ENCODE measurements at regions of chr1 and their contacts with region 1.

Region 1: DNA sequence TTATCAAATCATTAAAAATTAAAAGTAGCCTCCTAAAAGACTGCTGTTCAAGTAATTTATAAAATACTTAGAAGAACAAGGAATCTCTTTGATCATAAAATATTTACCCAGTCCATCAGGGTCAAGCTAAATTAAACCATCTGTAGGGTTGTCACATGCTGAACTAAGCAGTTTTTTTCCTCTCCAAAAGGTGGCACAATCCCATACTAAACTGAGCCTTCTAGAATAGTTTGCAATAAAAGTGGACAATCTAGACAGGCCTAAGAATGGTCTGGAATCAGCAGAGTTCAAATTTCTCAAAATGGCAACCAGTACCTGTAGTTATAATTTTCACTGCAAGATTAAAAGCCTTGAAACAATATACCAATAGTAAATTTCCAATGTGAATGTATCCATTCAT is 194.8 kb downstream of the EIF4G3 start:
- DNase-seq: peak; percentile 18
- ATAC-seq: peak; percentile 60; the same call in 1 of the 2 replicates
- H3K4me3 ChIP-seq: no peak overlapping the region
- H3K27ac ChIP-seq: no peak overlapping the region
- H3K4me1 ChIP-seq: peaks cover 10% of the 10 kb centered on the region
- H3K27me3 ChIP-seq: no peaks in the 10 kb centered on the region
- CTCF ChIP-seq: peak; percentile 43; the same call in 1 of the 2 replicates

Region 2: GRCh38 chr1:19468397-19468956 is 1513.4 kb before region 1 on chr1:
- CTCF ChIA-PET with region 1: no interaction called
- POLR2A ChIA-PET with region 1: no interaction called
- in situ Hi-C with region 1: no loop called
- intact Hi-C with region 1: no loop called
- DNase-seq: no peak
- ATAC-seq: no peak
- H3K4me3 ChIP-seq: no peak overlapping the region
- H3K27ac ChIP-seq: peak overlapping the region; percentile 76
- H3K4me1 ChIP-seq: peaks cover 69% of the 10 kb centered on the region
- H3K27me3 ChIP-seq: no peaks in the 10 kb centered on the region
- CTCF ChIP-seq: no peak

Region 3: DNA sequence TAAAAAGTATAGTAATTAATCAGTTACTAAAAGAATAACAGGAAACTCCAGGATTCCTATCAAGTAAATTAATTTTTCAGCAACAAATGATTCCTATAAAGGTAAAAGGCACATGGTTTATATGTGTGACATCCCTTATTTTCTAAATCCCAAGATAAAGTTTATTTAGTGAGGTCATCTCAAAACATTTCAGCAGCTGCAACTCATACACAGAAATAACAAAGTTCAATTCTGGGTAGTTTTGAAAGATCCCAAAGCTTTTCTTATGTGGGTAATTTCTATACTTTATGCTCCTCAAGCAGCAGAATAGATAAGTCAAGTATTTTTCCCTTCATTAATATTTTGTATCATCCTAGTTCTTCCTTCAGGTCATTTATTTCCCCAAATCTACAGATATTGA is 77.1 kb after region 1 on chr1:
- CTCF ChIA-PET with region 1: no interaction called
- POLR2A ChIA-PET with region 1: no interaction called
- in situ Hi-C with region 1: no loop called
- intact Hi-C with region 1: no loop called
- DNase-seq: no peak
- ATAC-seq: no peak
- H3K4me3 ChIP-seq: no peak overlapping the region
- H3K27ac ChIP-seq: no peak overlapping the region
- H3K4me1 ChIP-seq: peaks cover 1% of the 10 kb centered on the region; the same call in 1 of the 2 replicates
- H3K27me3 ChIP-seq: no peaks in the 10 kb centered on the region
- CTCF ChIP-seq: no peak

Region 4: GRCh38 chr1:21189906-21190500 is 208.1 kb after region 1 on chr1:
- CTCF ChIA-PET with region 1: interaction called, 6 read pairs
- POLR2A ChIA-PET with region 1: no interaction called
- in situ Hi-C with region 1: no loop called
- intact Hi-C with region 1: loop called (anchors 10 kb)
- DNase-seq: no peak
- ATAC-seq: no peak
- H3K4me3 ChIP-seq: no peak overlapping the region
- H3K27ac ChIP-seq: no peak overlapping the region
- H3K4me1 ChIP-seq: no peaks in the 10 kb centered on the region
- H3K27me3 ChIP-seq: no peaks in the 10 kb centered on the region
- CTCF ChIP-seq: no peak